Ascending aorta (tissue), 2 donors: ENCODE measurements at regions of chr5 and their contacts with region 1.

Region 1: DNA sequence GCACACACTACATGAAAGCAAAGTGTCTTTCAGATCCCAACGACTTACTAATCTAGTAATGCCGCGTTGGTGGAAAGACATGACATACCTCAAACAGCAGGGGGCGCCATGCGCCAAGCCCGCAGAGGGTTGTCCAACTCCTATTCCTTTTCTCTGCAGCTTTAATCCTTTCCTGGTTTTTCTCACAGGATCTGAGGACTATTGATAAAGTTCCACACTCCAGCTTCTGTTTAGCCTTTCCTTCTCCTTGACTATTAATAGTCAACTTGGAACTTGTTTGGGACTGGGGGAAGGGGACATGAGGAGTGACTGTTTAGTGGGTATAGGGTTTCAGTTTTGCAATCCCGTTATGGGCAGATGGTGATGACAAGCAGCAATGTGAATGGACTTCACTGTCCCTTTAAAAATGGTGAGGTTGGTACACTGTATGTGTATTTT is 62.9 kb downstream of the OTULIN start:
- DNase-seq: peak in 1 of 2 donors; percentile 88
- H3K4me3 ChIP-seq: no peak overlapping the region
- H3K27ac ChIP-seq: peak overlapping the region in 1 of 2 donors; percentile 58
- H3K4me1 ChIP-seq: peaks cover 2 to 16% of the 10 kb centered on the region in 2 donors
- H3K27me3 ChIP-seq: no peaks in the 10 kb centered on the region
- CTCF ChIP-seq: peak; percentile 91 to 93 (median 92)

Region 2: GRCh38 chr5:14685757-14686156 is 41.7 kb before region 1 on chr5:
- intact Hi-C with region 1: loop called (anchors 2 kb)
- DNase-seq: no peak
- H3K4me3 ChIP-seq: no peak overlapping the region
- H3K27ac ChIP-seq: no peak overlapping the region
- H3K4me1 ChIP-seq: peaks cover 0 to 28% of the 10 kb centered on the region in 2 donors
- H3K27me3 ChIP-seq: no peaks in the 10 kb centered on the region
- CTCF ChIP-seq: peak; percentile 69 to 79 (median 72)

Region 3: GRCh38 chr5:14830210-14831005 is 103.0 kb after region 1 on chr5:
- intact Hi-C with region 1: no loop called
- DNase-seq: peak in 1 of 2 donors; percentile 68
- H3K4me3 ChIP-seq: peak overlapping the region in 1 of 2 donors; percentile 27
- H3K27ac ChIP-seq: peak overlapping the region; percentile 66 to 69
- H3K4me1 ChIP-seq: peaks cover 5 to 32% of the 10 kb centered on the region in 2 donors
- H3K27me3 ChIP-seq: no peaks in the 10 kb centered on the region
- CTCF ChIP-seq: no peak